Mammary epithelial cell (primary cell): ENCODE measurements at regions of chr22 and their contacts with region 1.

Region 1: GRCh38 chr22:31290494-31291471 is 1.5 kb downstream of the PIK3IP1 start:
- DNase-seq: peak; percentile 95
- H3K4me3 ChIP-seq: peak overlapping the region; percentile 46 to 52 (median 49)
- H3K27ac ChIP-seq: peak overlapping the region; percentile 72
- H3K4me1 ChIP-seq: peaks cover 30% of the 10 kb centered on the region
- H3K27me3 ChIP-seq: no peaks in the 10 kb centered on the region
- CTCF ChIP-seq: no peak

Region 2: GRCh38 chr22:31262312-31263080 is 28.3 kb before region 1 on chr22:
- CTCF ChIA-PET with region 1: no interaction called
- dilution Hi-C with region 1: no loop called
- in situ Hi-C with region 1: no loop called
- intact Hi-C with region 1: no loop called
- DNase-seq: no peak
- H3K4me3 ChIP-seq: no peak overlapping the region
- H3K27ac ChIP-seq: no peak overlapping the region
- H3K4me1 ChIP-seq: no peaks in the 10 kb centered on the region
- H3K27me3 ChIP-seq: no peaks in the 10 kb centered on the region
- CTCF ChIP-seq: no peak

Region 3: DNA sequence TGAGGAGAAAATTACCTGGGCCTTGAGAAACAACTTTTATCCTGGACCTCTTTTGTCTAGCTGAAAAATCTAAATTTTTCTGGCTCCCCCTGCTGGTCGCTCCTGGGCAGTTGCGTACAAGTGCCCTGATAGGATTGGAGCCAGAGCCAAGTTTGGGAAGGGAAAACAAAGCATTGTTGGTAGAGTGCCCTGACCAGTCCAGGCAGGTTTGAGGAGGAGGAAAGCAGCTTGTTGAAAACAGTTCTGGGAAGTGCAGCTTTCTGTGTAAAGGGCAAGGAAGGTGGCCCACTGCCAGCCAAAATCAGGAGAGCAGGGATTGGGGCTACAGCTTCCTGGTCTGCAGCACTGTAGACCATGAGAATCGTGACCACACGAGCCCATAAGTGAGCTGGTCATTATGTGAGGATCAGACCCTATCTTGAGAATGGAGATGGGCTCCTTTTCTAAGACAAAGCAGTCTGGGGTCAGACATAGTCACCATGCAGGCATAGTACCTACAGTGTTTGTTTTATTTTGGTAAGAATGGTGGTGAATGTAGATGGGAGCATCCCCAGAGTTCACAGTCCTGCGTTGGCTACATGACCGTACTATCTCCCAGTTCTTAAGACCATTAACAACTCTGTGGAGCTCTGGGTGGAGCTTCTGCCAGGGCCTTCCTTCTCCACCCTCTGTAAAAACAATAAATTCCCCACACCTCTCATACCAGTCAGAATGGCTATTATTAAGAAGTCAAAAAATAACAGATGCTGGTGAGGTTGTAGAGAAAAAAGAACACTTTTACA is 22.8 kb after region 1 on chr22:
- CTCF ChIA-PET with region 1: interaction called, 4 read pairs
- dilution Hi-C with region 1: no loop called
- in situ Hi-C with region 1: no loop called
- intact Hi-C with region 1: loop called (anchors 1 kb)
- DNase-seq: peak; percentile 87
- H3K4me3 ChIP-seq: no peak overlapping the region
- H3K27ac ChIP-seq: peak overlapping the region; percentile 52
- H3K4me1 ChIP-seq: peaks cover 6% of the 10 kb centered on the region
- H3K27me3 ChIP-seq: no peaks in the 10 kb centered on the region
- CTCF ChIP-seq: peak; percentile 88 to 95

Region 4: DNA sequence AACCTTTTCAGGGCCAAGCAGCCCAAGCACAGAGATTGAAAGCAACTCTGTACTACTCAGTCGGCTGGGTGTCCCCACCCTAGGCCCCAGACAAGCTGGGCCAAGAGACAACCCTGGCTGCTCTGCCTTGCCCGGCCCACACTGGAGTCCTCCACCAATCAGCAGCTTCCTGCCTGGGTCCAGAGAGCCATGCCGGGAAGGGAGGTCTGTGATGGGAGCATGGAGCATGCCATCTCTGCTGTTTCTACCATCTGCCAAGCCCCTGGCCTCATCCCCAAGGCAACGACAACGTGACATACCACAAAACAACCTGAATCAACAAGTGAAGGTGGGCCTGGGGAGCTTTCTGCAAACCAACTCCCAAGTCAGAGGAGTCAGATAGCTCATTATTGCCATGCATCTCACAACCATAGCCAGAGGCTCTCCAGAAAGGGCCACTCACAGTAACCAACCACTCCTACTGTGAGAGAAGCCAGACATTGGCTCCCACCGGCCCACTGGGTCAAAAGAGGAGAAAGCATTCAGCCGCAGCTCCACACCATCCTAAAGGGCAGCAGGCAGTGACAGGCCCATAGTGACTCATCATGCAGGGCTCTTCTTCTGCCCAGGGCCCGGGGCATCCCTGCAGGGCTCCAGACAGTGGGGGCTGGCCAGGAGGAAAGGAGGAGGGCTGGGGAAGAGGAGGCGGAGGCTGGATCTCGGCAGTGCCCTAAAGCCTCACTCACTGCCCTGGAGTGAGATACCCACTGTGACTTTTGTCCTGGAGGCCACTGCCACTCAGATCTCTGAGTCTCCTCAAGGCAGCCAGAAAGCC is 37.3 kb after region 1 on chr22:
- CTCF ChIA-PET with region 1: no interaction called
- dilution Hi-C with region 1: loop called (anchors 5 kb)
- in situ Hi-C with region 1: no loop called
- intact Hi-C with region 1: loop called (anchors 2 kb)
- DNase-seq: peak; percentile 61
- H3K4me3 ChIP-seq: no peak overlapping the region
- H3K27ac ChIP-seq: no peak overlapping the region
- H3K4me1 ChIP-seq: peaks cover 30% of the 10 kb centered on the region
- H3K27me3 ChIP-seq: no peaks in the 10 kb centered on the region
- CTCF ChIP-seq: no peak

Region 5: DNA sequence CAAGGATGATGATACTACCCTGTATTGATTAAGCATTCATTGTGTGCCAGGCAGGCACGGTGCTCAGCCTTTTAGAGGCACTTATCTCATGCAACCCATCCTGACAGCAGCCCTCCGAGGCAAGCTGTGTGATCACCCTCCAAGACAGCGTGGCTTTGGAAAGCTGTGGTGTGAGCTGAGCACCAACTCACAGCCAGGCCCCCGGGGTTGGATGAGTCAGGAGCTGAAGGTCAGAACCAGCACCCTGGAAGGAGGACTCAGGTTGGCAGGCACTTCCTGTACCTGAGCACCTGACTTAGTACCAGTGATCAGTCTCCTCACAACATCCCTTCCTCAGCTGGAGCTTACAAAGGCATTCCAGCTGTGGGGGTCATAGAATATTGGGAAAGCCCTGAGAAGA is 46.4 kb after region 1 on chr22:
- CTCF ChIA-PET with region 1: no interaction called
- dilution Hi-C with region 1: loop called (anchors 5 kb)
- in situ Hi-C with region 1: no loop called
- intact Hi-C with region 1: loop called (anchors 2 kb)
- DNase-seq: peak; percentile 72
- H3K4me3 ChIP-seq: no peak overlapping the region
- H3K27ac ChIP-seq: no peak overlapping the region
- H3K4me1 ChIP-seq: peaks cover 15% of the 10 kb centered on the region
- H3K27me3 ChIP-seq: no peaks in the 10 kb centered on the region
- CTCF ChIP-seq: no peak